Caco-2 (cell line): ENCODE measurements at regions of chr9 and their contacts with region 1.

Region 1: DNA sequence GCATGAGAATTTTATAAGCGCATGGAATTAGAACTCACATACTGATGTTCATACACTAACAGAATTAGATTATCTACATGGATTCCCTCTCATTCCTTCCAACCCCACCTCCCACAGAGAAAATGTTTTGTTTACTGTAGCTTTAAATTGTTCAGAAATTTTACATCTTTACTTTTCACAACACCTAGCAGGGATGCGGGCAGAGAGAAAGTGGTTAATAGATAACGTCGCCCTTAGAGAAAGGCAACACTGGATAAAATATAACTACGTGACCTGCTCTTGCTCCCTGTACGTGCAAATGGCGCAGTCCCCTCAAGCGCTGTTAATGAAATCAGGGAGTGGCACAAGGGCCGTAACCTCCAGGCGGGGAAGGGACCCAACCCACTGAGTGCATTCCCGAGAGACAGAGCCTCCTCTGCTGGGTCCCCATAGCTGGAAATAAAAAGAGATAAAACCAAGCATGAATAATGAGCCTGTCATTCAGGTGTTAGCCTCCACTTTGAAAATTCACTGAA is 125.3 kb upstream of the DAPK1 start:
- DNase-seq: peak; percentile 83 to 95
- H3K4me3 ChIP-seq: no peak overlapping the region
- H3K4me3 Mint-ChIP-seq: peak overlapping the region; percentile 52
- H3K27ac Mint-ChIP-seq: peak overlapping the region; percentile 54
- H3K4me1 ChIP-seq: peaks cover 57% of the 10 kb centered on the region
- H3K4me1 Mint-ChIP-seq: no peaks in the 10 kb centered on the region
- H3K27me3 ChIP-seq: no peaks in the 10 kb centered on the region
- H3K27me3 Mint-ChIP-seq: no peaks in the 10 kb centered on the region
- CTCF ChIP-seq: no peak

Region 2: GRCh38 chr9:87223392-87224246 is 148.8 kb before region 1 on chr9:
- CTCF ChIA-PET with region 1: no interaction called
- POLR2A ChIA-PET with region 1: no interaction called
- intact Hi-C with region 1: no loop called
- DNase-seq: no peak
- H3K4me3 ChIP-seq: no peak overlapping the region
- H3K4me3 Mint-ChIP-seq: no peak overlapping the region
- H3K27ac Mint-ChIP-seq: no peak overlapping the region
- H3K4me1 ChIP-seq: no peaks in the 10 kb centered on the region
- H3K4me1 Mint-ChIP-seq: no peaks in the 10 kb centered on the region
- H3K27me3 ChIP-seq: no peaks in the 10 kb centered on the region; the same call in 1 of the 2 replicates
- H3K27me3 Mint-ChIP-seq: peaks cover 5% of the 10 kb centered on the region
- CTCF ChIP-seq: no peak

Region 3: GRCh38 chr9:87336914-87337333 is 35.5 kb before region 1 on chr9:
- CTCF ChIA-PET with region 1: interaction called, 3 read pairs
- POLR2A ChIA-PET with region 1: no interaction called
- intact Hi-C with region 1: loop called (anchors 1 kb)
- DNase-seq: peak; percentile 24 to 48
- H3K4me3 ChIP-seq: peak overlapping the region; percentile 16
- H3K4me3 Mint-ChIP-seq: peak overlapping the region; percentile 72
- H3K27ac Mint-ChIP-seq: no peak overlapping the region
- H3K4me1 ChIP-seq: peaks cover 10% of the 10 kb centered on the region
- H3K4me1 Mint-ChIP-seq: peaks cover 8% of the 10 kb centered on the region
- H3K27me3 ChIP-seq: no peaks in the 10 kb centered on the region
- H3K27me3 Mint-ChIP-seq: no peaks in the 10 kb centered on the region
- CTCF ChIP-seq: peak in 1 of 2 experiments; percentile 46

Region 4: GRCh38 chr9:87354147-87354546 is 18.2 kb before region 1 on chr9:
- CTCF ChIA-PET with region 1: no interaction called
- POLR2A ChIA-PET with region 1: no interaction called
- intact Hi-C with region 1: loop called (anchors 1 kb)
- DNase-seq: peak in 1 of 2 experiments; percentile 48
- H3K4me3 ChIP-seq: no peak overlapping the region
- H3K4me3 Mint-ChIP-seq: no peak overlapping the region
- H3K27ac Mint-ChIP-seq: no peak overlapping the region
- H3K4me1 ChIP-seq: peaks cover 5% of the 10 kb centered on the region; the same call in 1 of the 2 replicates
- H3K4me1 Mint-ChIP-seq: peaks cover 4% of the 10 kb centered on the region
- H3K27me3 ChIP-seq: no peaks in the 10 kb centered on the region
- H3K27me3 Mint-ChIP-seq: no peaks in the 10 kb centered on the region
- CTCF ChIP-seq: no peak

Region 5: DNA sequence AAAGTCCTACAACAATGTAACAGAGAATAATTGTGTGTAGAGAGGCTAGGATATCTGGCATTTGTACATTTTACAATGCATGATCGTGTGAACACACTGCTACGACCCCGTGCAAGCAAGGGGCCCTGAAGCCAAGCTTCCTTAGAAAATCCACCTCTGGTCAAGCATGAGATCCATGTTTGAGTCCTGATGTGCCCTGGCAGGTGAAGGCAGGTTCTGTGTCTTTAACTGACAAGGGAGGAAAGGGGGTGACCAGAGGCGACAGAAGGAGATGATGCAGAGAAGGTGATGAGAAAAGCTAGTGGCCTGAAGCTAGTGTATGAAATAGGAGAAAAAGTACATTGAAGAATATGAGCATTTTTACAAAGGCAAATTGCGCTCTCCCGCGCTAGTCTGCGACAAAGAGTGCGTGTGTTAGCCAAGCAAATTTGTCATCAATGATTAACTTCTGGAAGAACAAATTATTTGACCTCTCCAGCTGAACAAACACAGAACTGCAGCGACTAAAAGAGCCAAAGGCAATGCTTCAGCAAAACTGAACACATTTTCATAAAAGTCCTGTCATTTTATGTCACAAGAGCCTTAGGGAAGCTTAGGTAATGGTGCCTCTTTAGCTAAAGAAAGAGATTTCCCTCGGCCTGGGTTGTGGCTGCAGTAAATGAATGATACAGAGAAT is 23.5 kb after region 1 on chr9:
- CTCF ChIA-PET with region 1: no interaction called
- POLR2A ChIA-PET with region 1: interaction called, 3 read pairs
- intact Hi-C with region 1: loop called (anchors 1 kb)
- DNase-seq: peak; percentile 66 to 69
- H3K4me3 ChIP-seq: no peak overlapping the region
- H3K4me3 Mint-ChIP-seq: peak overlapping the region; percentile 45
- H3K27ac Mint-ChIP-seq: peak overlapping the region; percentile 69
- H3K4me1 ChIP-seq: peaks cover 20% of the 10 kb centered on the region
- H3K4me1 Mint-ChIP-seq: peaks cover 8% of the 10 kb centered on the region
- H3K27me3 ChIP-seq: no peaks in the 10 kb centered on the region
- H3K27me3 Mint-ChIP-seq: no peaks in the 10 kb centered on the region
- CTCF ChIP-seq: no peak

Region 6: GRCh38 chr9:87405677-87406542 is 33.5 kb after region 1 on chr9:
- CTCF ChIA-PET with region 1: no interaction called
- POLR2A ChIA-PET with region 1: no interaction called
- intact Hi-C with region 1: loop called (anchors 2 kb)
- DNase-seq: no peak
- H3K4me3 ChIP-seq: no peak overlapping the region
- H3K4me3 Mint-ChIP-seq: no peak overlapping the region
- H3K27ac Mint-ChIP-seq: no peak overlapping the region
- H3K4me1 ChIP-seq: peaks cover 39% of the 10 kb centered on the region
- H3K4me1 Mint-ChIP-seq: peaks cover 20% of the 10 kb centered on the region
- H3K27me3 ChIP-seq: no peaks in the 10 kb centered on the region
- H3K27me3 Mint-ChIP-seq: no peaks in the 10 kb centered on the region
- CTCF ChIP-seq: no peak

Region 7: GRCh38 chr9:87497604-87498045 is 125.2 kb after region 1 on chr9 and contains the start of gene DAPK1:
- CTCF ChIA-PET with region 1: interaction called, 3 read pairs
- POLR2A ChIA-PET with region 1: interaction called, 4 read pairs
- intact Hi-C with region 1: loop called (anchors 1 kb)
- DNase-seq: peak; percentile 68 to 73
- H3K4me3 ChIP-seq: peak within 1 kb of the TSS; percentile 70
- H3K4me3 Mint-ChIP-seq: peak within 1 kb of the TSS; percentile 78
- H3K27ac Mint-ChIP-seq: peak within 1 kb of the TSS; percentile 73
- H3K4me1 ChIP-seq: peaks cover 6% of the 10 kb centered on the region; the same call in 1 of the 2 replicates
- H3K4me1 Mint-ChIP-seq: peaks cover 11% of the 10 kb centered on the region
- H3K27me3 ChIP-seq: no peaks in the 10 kb centered on the region
- H3K27me3 Mint-ChIP-seq: no peaks in the 10 kb centered on the region
- CTCF ChIP-seq: peak; percentile 13 to 18
- total RNA-seq, gene DAPK1: 65.8 and 79.2 TPM in 2 replicates

Region 8: DNA sequence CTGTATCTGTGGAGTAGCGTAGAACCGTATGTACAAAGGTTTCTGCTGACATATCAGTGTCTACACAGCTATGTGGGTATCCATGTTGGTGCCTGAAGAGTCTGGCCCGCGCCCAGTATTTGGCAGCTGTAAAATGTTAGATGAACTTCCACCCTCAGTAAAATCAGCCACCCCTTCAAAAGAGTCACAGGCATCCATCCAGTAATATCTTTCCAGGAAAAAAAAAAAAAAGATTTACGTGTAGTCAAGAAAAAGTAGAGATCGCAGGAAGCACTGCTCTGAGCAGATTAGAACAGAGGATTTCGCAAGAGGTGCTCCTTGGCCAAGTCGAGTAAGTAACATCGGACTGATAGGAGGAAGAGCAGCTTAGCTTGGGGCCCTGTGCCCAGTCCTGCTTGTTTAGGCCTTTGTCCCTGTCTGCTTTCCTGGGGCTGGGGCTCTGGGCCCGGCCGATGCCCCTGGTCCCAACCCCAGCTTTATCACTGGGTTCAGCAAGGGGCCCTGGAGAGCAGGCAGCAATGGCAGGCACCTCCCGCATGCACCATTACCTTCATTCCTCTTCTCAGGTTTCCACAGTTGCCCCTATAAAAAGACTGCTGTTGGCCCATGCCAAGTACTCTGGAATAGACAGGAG is 146.4 kb after region 1 on chr9:
- CTCF ChIA-PET with region 1: no interaction called
- POLR2A ChIA-PET with region 1: no interaction called
- intact Hi-C with region 1: no loop called
- DNase-seq: no peak
- H3K4me3 ChIP-seq: no peak overlapping the region
- H3K4me3 Mint-ChIP-seq: no peak overlapping the region
- H3K27ac Mint-ChIP-seq: no peak overlapping the region
- H3K4me1 ChIP-seq: no peaks in the 10 kb centered on the region
- H3K4me1 Mint-ChIP-seq: no peaks in the 10 kb centered on the region
- H3K27me3 ChIP-seq: no peaks in the 10 kb centered on the region
- H3K27me3 Mint-ChIP-seq: no peaks in the 10 kb centered on the region
- CTCF ChIP-seq: no peak

Region 9: GRCh38 chr9:87570000-87570908 is 197.9 kb after region 1 on chr9:
- CTCF ChIA-PET with region 1: no interaction called
- POLR2A ChIA-PET with region 1: no interaction called
- intact Hi-C with region 1: loop called (anchors 1 kb)
- DNase-seq: peak in 1 of 2 experiments; percentile 40
- H3K4me3 ChIP-seq: 0 out of 2 replicates have a peak overlapping the region, but pooled peaks have one; percentile 9
- H3K4me3 Mint-ChIP-seq: peak overlapping the region; percentile 48
- H3K27ac Mint-ChIP-seq: peak overlapping the region; percentile 72
- H3K4me1 ChIP-seq: peaks cover 34% of the 10 kb centered on the region
- H3K4me1 Mint-ChIP-seq: peaks cover 7% of the 10 kb centered on the region
- H3K27me3 ChIP-seq: no peaks in the 10 kb centered on the region
- H3K27me3 Mint-ChIP-seq: no peaks in the 10 kb centered on the region
- CTCF ChIP-seq: no peak